ENCODE measurements at regions of chr15 and their contacts with region 1.

Region 1: DNA sequence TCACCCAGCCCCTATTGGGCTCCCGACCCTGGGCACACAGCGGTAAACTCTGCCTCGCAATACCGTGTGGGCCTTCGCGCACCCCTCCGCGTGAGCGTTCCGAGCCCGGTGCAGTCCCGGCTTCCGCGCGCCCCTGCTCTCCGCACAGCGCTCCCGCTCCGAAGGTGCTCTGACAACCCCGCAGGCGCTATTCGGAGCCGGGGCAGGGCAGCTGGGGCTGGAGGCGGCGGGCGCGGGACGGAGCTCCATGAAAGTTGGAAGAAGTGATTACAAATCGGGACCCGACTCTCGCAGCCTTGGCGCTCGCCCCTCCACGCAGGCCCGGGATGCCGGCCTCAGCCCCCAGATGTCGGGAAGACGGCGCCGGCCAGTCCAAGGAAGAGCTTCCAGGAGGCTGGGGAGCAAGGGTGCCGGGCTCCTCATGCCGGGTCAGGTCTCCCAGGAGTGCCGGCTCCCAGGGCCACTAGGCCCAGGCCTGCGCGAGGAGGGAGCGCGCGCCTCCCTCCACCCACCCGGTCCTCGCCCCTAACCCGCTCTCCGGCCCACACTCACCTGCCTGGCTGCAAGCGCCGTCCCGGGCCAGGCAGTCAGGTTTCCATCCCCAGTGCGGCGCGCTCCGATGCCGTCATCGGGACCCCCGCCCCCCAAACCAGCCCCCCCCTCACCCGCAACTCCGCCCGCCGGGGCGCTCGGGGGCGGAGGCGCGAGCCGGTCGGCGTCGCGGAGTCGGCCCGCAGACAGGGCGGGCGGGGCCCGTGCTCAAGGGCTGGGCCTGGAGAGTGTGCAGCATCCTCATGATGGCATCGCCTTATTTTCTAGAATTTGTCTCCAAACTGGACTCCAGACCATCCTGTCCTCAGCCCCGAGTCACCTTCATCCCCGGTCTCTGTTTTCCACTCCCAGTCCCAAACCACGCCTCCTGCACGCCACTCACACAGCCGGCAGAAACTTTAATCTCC is at the start of gene KIF7:
- DNase-seq: peak in 1 of 2 donors; percentile 48
- ATAC-seq: peak; percentile 56 to 84 (median 76)
- H3K4me3 ChIP-seq: peak within 1 kb of the TSS; percentile 67
- H3K27ac ChIP-seq: no peak within 1 kb of the TSS
- H3K4me1 ChIP-seq: no peaks in the 10 kb centered on the region
- H3K27me3 ChIP-seq: peaks cover 0 to 28% (median 8%) of the 10 kb centered on the region in 3 donors
- CTCF ChIP-seq: no peak
- total RNA-seq, gene KIF7: 0.40 to 2.1 (median 0.81) TPM

Region 2: GRCh38 chr15:89670971-89671560 is 15.9 kb after region 1 on chr15:
- intact Hi-C with region 1: loop called in 1 of 2 experiments (anchors 1 kb)
- DNase-seq: no peak
- ATAC-seq: no peak
- H3K4me3 ChIP-seq: no peak overlapping the region
- H3K27ac ChIP-seq: no peak overlapping the region
- H3K4me1 ChIP-seq: no peaks in the 10 kb centered on the region
- H3K27me3 ChIP-seq: no peaks in the 10 kb centered on the region
- CTCF ChIP-seq: no peak

Region 3: GRCh38 chr15:89993349-89993748 is 338.2 kb after region 1 on chr15:
- intact Hi-C with region 1: no loop called
- DNase-seq: no peak
- ATAC-seq: no peak
- H3K4me3 ChIP-seq: no peak overlapping the region
- H3K27ac ChIP-seq: no peak overlapping the region
- H3K4me1 ChIP-seq: no peaks in the 10 kb centered on the region
- H3K27me3 ChIP-seq: no peaks in the 10 kb centered on the region
- CTCF ChIP-seq: no peak